ENCODE measurements at regions of chr2 and their contacts with region 1.

Region 1: GRCh38 chr2:24490674-24491625 is at the start of gene NCOA1:
- DNase-seq: peak; percentile 88
- H3K4me3 Mint-ChIP-seq: peak within 1 kb of the TSS; percentile 93
- H3K27ac Mint-ChIP-seq: peak within 1 kb of the TSS; percentile 92
- H3K4me1 Mint-ChIP-seq: peaks cover 44% of the 10 kb centered on the region
- H3K27me3 Mint-ChIP-seq: peaks cover 4% of the 10 kb centered on the region
- total RNA-seq, gene NCOA1: 28.2 and 28.3 TPM in 2 replicates

Region 2: GRCh38 chr2:24046930-24047702 is 443.8 kb before region 1 on chr2 and contains the start of gene WDCP:
- intact Hi-C with region 1: loop called (anchors 5 kb)
- DNase-seq: peak; percentile 93
- H3K4me3 Mint-ChIP-seq: peak within 1 kb of the TSS; percentile 93
- H3K27ac Mint-ChIP-seq: peak within 1 kb of the TSS; percentile 81
- H3K4me1 Mint-ChIP-seq: peaks cover 20% of the 10 kb centered on the region
- H3K27me3 Mint-ChIP-seq: peaks cover 6% of the 10 kb centered on the region
- total RNA-seq, gene WDCP: 22.0 and 22.1 TPM in 2 replicates

Region 3: DNA sequence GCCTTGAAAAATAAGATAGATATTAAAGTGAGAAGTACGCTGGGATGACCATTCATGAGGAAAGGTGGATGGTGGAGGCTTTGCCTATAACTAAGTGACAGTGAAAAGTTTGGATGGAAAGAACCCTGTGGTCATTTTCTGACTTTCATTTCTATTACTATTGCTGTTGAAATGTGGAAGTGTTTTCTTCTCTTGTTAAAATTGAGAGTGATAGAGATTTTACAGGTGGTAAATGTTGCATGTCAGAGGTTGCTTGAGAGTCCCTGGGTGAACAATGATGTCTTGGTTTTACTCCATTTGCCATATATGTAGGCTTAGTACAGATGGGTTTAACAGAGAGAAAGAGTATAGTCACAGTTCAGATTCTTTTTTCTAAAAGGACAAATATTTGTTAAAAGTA is 18.5 kb after region 1 on chr2:
- intact Hi-C with region 1: loop called (anchors 2 kb)
- DNase-seq: no peak
- H3K4me3 Mint-ChIP-seq: no peak overlapping the region
- H3K27ac Mint-ChIP-seq: peak overlapping the region; percentile 40
- H3K4me1 Mint-ChIP-seq: peaks cover 46% of the 10 kb centered on the region
- H3K27me3 Mint-ChIP-seq: no peaks in the 10 kb centered on the region

Region 4: GRCh38 chr2:24521975-24522639 is 31.2 kb after region 1 on chr2:
- intact Hi-C with region 1: loop called (anchors 2 kb)
- DNase-seq: no peak
- H3K4me3 Mint-ChIP-seq: no peak overlapping the region
- H3K27ac Mint-ChIP-seq: peak overlapping the region; percentile 84
- H3K4me1 Mint-ChIP-seq: peaks cover 39% of the 10 kb centered on the region
- H3K27me3 Mint-ChIP-seq: no peaks in the 10 kb centered on the region

Region 5: GRCh38 chr2:24792874-24793760 is 302.2 kb after region 1 on chr2 and contains the starts of genes CENPO and PTRHD1:
- intact Hi-C with region 1: loop called (anchors 2 kb)
- DNase-seq: peak; percentile 93
- H3K4me3 Mint-ChIP-seq: peak within 1 kb of the TSS; percentile 95
- H3K27ac Mint-ChIP-seq: peak within 1 kb of the TSS; percentile 99
- H3K4me1 Mint-ChIP-seq: peaks cover 38% of the 10 kb centered on the region
- H3K27me3 Mint-ChIP-seq: no peaks in the 10 kb centered on the region
- total RNA-seq, gene CENPO: 41.8 and 46.4 TPM in 2 replicates
- total RNA-seq, gene PTRHD1: 25.9 and 26.6 TPM in 2 replicates

Region 6: DNA sequence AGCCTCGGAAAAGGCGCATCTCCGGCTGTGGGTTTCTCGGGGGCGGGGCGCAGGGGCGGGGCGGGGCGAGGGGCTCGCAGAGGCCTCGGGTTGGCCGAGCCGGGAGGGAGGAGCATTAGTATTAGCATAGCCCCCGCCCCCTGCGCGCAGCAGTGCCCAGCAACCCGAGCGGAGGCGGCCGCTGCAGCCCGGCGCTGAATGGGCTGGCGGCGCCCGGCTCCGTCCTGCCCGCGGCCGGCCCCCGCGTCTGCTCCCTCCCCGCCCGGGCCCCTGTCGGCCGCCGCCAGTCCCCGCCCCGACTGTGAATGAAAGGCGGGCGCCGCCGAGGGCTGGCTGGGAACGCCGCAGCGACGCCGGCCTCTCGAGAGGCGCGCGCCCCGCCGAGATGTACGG is 551.0 kb after region 1 on chr2 and contains the start of gene EFR3B:
- intact Hi-C with region 1: loop called (anchors 5 kb)
- DNase-seq: peak; percentile 81
- H3K4me3 Mint-ChIP-seq: peak within 1 kb of the TSS; percentile 77
- H3K27ac Mint-ChIP-seq: no peak within 1 kb of the TSS
- H3K4me1 Mint-ChIP-seq: peaks cover 24% of the 10 kb centered on the region
- H3K27me3 Mint-ChIP-seq: peaks cover 49% of the 10 kb centered on the region
- total RNA-seq, gene EFR3B: 0.34 and 0.46 TPM in 2 replicates